OCI-LY7 (cell line): ENCODE measurements at regions of chr9 and their contacts with region 1.

Region 1: DNA sequence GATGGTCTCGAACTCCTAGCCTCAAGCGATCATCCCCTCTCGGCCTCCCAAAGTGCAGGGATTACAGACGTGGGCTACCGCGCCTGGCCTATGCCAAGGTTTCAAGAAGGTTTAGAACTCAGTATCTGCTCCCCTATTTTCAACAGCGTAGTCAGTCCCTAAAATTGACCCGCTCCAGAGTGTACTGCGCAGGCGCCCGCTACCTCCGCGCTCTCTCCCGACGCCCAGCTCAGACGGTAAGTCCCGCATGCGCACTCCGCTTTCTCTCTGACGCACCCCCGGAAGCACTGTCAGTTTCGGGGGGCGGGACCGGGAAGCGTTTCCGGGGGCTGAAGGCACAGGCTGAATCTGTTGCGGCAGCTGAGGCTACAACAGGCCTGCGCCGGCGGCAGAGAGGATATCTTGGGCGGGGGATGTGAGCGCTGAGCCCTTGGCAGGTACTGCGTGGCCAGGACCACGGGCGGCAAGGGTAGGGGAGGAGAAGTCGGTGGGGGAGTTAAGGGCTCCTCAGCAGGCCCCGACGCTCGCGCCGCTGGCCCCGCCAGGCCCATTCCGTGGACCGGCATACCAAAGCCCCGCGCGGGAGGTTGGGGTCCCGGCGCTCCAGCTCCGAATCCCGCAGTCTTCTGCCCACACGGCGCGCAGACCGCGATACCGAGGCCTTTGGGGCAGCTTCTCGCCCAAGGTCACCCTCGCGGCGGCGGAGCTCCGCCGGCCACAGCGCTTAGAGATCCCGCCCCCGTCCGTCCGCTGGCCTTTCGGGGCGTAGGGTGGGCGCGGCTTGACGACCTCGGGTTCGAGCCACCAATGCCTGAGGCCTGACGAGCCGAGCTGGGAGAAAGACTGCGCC is at the start of gene ZBTB43:
- DNase-seq: peak; percentile 95
- H3K4me3 ChIP-seq: peak within 1 kb of the TSS; percentile 82
- H3K27ac ChIP-seq: peak within 1 kb of the TSS; percentile 50
- H3K4me1 ChIP-seq: peaks cover 23% of the 10 kb centered on the region
- CTCF ChIP-seq: no peak
- total RNA-seq, gene ZBTB43: 3.3 and 4.1 TPM in 2 replicates

Region 2: GRCh38 chr9:126860077-126860756 is 55.3 kb after region 1 on chr9 and contains the start of gene ZBTB34:
- CTCF ChIA-PET with region 1: no interaction called
- POLR2A ChIA-PET with region 1: no interaction called
- intact Hi-C with region 1: loop called (anchors 5 kb)
- DNase-seq: peak; percentile 80
- H3K4me3 ChIP-seq: peak within 1 kb of the TSS; percentile 81
- H3K27ac ChIP-seq: peak within 1 kb of the TSS; percentile 54
- H3K4me1 ChIP-seq: peaks cover 33% of the 10 kb centered on the region
- CTCF ChIP-seq: peak; percentile 95
- total RNA-seq, gene ZBTB34: 6.5 and 7.5 TPM in 2 replicates